ENCODE measurements at regions of chr3 and their contacts with region 1.

Region 1: DNA sequence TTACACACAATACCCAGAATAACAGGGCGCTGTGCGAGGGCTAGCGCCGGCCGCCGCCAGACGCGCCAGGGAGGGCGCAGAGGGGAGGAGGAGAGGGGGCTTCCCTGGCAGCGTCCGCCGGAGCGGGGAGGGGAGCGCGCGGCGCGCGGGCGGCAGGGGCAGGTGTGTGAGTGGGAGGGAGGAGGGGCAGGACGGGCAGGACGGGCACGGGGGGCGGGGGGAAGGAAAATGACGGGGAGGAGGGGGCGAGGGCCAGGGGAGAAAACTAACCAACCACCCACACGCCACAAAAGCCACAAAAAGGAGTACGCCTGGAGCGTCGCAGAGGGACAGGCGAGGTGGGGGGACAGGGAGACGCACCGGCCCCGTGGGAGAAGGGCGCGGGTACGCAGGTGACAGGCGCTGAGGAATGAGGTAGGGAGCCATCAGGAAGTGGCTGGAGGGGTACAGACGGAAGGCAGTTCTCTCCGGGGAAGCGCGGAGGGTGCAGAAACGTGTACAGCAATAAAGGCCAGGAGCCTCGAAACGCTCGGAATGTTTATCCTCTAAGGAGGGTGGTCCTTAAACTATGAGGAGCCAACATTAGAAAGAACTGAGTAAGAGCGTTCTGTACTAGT is 610 bp upstream of the SATB1 start:
- DNase-seq: peak; percentile 53 to 74 (median 60)
- ATAC-seq: peak; percentile 23 to 78 (median 60)
- H3K4me3 ChIP-seq: peak overlapping the region; percentile 67 to 92 (median 86)
- H3K27ac ChIP-seq: peak overlapping the region in 11 of 12 donors; percentile 88 to 96 (median 92)
- H3K4me1 ChIP-seq: peaks cover 0 to 30% (median 12%) of the 10 kb centered on the region in 12 donors
- H3K27me3 ChIP-seq: no peaks in the 10 kb centered on the region
- CTCF ChIP-seq: no peak
- POLR2A ChIP-seq: no peak

Region 2: DNA sequence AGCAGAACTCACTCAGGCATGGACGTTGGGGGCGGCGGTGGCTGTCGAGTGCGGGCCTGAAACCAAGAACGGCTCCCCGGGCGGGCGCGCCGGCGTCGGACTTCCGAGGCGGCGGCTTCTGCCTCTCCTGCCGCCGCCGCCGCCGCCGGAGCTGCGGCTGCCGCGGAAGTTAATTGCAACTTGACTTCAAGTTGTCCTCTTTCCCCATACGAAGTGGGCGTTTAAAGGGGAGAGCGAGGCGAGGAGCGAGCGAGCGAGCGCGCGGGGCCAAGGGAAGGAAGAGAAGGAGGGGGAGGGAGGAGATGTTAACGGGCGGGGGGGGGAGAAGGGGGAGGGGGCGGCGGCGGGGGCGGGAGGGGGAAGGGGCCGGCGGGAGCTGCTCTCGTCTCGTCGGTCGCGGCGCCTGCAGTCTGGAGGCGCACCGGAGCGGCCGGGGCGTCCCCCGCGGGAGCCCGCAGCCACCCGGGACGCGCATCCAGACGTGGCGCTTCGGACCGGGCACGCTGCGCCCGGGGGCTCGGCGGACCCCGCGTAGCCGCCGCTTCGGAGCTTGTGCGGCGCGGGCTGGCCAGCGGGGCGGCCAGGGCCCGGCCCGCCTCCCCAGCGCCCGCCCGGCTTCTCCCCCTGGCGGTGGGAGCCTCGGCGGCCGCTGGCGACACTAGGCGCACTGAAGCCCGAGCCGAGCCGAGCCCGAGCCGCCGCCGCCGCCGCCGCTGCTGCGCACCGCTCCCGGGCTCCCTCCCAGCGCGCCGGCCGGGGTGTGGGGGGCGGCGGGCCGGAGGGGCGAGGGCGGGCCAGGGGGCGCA is 19.0 kb after region 1 on chr3:
- intact Hi-C with region 1: loop called in 1 of 10 experiments (anchors 2 kb)
- DNase-seq: peak; percentile 55 to 89 (median 75)
- ATAC-seq: peak; percentile 74 to 98 (median 94)
- H3K4me3 ChIP-seq: peak overlapping the region; percentile 26 to 69 (median 60)
- H3K27ac ChIP-seq: peak overlapping the region in 3 of 12 donors; percentile 61 to 76 (median 64)
- H3K4me1 ChIP-seq: peaks cover 0 to 23% (median 16%) of the 10 kb centered on the region in 12 donors
- H3K27me3 ChIP-seq: peaks cover 0 to 42% (median 10%) of the 10 kb centered on the region in 9 donors
- CTCF ChIP-seq: peak in 9 of 12 donors; percentile 21 to 67 (median 41)
- POLR2A ChIP-seq: no peak